Right ventricle myocardium superior (tissue), 1 donor: ENCODE measurements at regions of chr5 and their contacts with region 1.

Region 1: DNA sequence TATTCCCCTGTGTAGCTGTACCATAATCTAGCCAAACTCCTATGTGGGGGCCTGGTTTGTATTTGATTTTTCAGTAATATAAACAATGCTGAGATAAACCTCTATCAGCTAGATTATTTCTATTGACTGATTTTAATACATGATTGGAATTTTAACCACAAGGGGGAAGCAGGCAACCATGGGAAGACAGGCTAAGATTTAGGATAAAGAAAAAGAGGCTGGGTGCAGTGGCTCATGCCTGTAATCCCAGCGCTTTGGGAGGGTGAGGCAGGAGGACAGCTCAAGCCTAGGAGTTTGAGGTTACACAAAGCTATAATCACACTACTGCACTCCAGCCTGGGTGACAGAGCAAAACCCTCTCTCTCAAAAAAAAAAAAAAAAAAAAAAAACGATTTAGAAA is 18.1 kb upstream of the GPX3 start:
- DNase-seq: no peak
- ATAC-seq: no peak

Region 2: GRCh38 chr5:151051066-151051930 is 49.0 kb after region 1 on chr5:
- intact Hi-C with region 1: loop called (anchors 5 kb)
- DNase-seq: peak; percentile 89
- ATAC-seq: peak; percentile 85

Region 3: GRCh38 chr5:151110122-151110681 is 108.0 kb after region 1 on chr5:
- intact Hi-C with region 1: loop called (anchors 5 kb)
- DNase-seq: no peak
- ATAC-seq: peak; percentile 56

Region 4: DNA sequence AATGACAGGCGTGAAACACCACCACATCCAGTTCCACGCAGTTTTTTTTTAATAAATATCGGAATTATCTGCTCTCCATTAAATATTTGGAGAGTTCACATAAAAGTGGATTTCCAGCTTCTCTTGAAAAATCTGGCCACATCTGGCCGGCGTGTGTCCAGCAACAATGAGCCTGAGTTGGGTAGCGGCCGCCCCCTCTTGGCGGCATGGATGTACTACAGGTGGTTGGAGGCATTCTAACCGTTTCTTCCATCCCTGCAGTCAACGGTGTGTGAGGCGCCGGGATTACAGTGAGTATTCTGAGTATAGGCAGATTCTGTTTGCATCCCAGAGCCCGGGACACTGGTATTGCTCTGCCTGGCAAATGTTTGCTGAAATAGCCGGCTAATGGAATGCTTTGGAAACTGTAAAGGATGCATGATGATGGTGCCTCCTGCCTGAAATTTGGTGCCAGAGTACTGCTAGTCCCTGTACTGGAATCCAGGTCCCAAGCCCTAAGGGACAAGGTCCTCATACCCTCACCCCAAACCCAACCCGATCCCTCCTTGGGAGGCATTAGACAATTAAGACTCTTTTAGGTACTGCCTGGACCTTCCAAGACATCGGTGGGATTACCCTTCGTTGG is 237.1 kb after region 1 on chr5:
- intact Hi-C with region 1: loop called (anchors 10 kb)
- DNase-seq: peak; percentile 90
- ATAC-seq: peak; percentile 79